Activated CD8-positive, alpha-beta T cell treated with anti-CD3 and anti-CD28 coated beads for 36 hours (primary cell): ENCODE measurements at regions of chr15 and their contacts with region 1.

Region 1: GRCh38 chr15:91706322-91707032 is 147.0 kb upstream of the SLCO3A1 start:
- DNase-seq: peak; percentile 92
- ATAC-seq: peak; percentile 99
- H3K4me3 Mint-ChIP-seq: no peak overlapping the region
- H3K27ac Mint-ChIP-seq: peak overlapping the region; percentile 69
- H3K4me1 Mint-ChIP-seq: peaks cover 15% of the 10 kb centered on the region
- H3K27me3 Mint-ChIP-seq: peaks cover 5% of the 10 kb centered on the region
- CTCF ChIP-seq: peak; percentile 85

Region 2: GRCh38 chr15:91445758-91446157 is 260.7 kb before region 1 on chr15:
- CTCF ChIA-PET with region 1: no interaction called
- POLR2A ChIA-PET with region 1: no interaction called
- intact Hi-C with region 1: no loop called
- DNase-seq: no peak
- ATAC-seq: no peak
- H3K4me3 Mint-ChIP-seq: no peak overlapping the region
- H3K27ac Mint-ChIP-seq: no peak overlapping the region
- H3K4me1 Mint-ChIP-seq: no peaks in the 10 kb centered on the region
- H3K27me3 Mint-ChIP-seq: no peaks in the 10 kb centered on the region
- CTCF ChIP-seq: no peak

Region 3: DNA sequence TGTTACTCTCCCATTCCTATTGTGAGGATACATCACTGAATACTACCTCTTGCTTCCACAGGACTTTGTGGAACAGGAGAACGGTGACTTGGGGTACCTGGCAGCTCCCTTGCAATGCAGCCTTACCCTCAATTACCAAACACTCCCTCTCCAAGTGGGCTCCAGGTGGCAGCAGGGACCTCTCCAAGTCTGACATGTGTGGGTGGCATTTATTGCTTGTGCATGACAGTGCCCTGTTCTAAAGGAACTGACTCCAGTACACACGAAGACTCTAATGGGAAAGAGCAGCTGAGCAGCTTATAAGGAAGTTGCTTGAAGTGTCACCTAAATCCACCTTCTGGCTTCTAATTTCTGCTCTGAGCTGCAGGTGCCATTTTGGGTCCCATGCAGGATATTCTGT is 27.0 kb before region 1 on chr15:
- CTCF ChIA-PET with region 1: interaction called, 13 read pairs
- POLR2A ChIA-PET with region 1: no interaction called
- intact Hi-C with region 1: no loop called
- DNase-seq: peak; percentile 17
- ATAC-seq: no peak
- H3K4me3 Mint-ChIP-seq: no peak overlapping the region
- H3K27ac Mint-ChIP-seq: no peak overlapping the region
- H3K4me1 Mint-ChIP-seq: no peaks in the 10 kb centered on the region
- H3K27me3 Mint-ChIP-seq: peaks cover 12% of the 10 kb centered on the region
- CTCF ChIP-seq: no peak

Region 4: DNA sequence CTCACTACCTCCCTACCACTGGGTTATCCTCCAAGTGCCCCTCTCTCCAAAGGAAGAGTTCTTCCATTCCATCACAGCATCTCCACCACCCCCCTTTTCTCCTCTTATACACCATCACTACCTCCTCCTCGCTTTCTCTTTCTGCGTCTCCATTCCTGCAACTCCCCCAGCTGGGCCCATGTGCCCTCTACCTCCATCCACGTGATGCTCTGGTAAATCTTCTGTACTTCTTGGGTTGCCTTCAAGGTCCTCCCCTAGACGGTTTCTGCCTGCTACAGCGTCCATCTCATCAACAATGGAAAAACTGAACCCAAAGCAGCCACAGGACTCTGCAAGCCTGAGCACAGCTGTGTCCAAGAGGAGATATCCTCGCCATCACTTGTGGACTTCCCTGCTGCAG is 17.5 kb after region 1 on chr15:
- CTCF ChIA-PET with region 1: interaction called, 29 read pairs
- POLR2A ChIA-PET with region 1: no interaction called
- intact Hi-C with region 1: no loop called
- DNase-seq: no peak
- ATAC-seq: no peak
- H3K4me3 Mint-ChIP-seq: no peak overlapping the region
- H3K27ac Mint-ChIP-seq: no peak overlapping the region
- H3K4me1 Mint-ChIP-seq: no peaks in the 10 kb centered on the region
- H3K27me3 Mint-ChIP-seq: no peaks in the 10 kb centered on the region
- CTCF ChIP-seq: no peak

Region 5: GRCh38 chr15:91942676-91943576 is 236.4 kb after region 1 on chr15:
- CTCF ChIA-PET with region 1: interaction called, 13 read pairs
- POLR2A ChIA-PET with region 1: no interaction called
- intact Hi-C with region 1: no loop called
- DNase-seq: peak; percentile 46
- ATAC-seq: peak; percentile 77
- H3K4me3 Mint-ChIP-seq: no peak overlapping the region
- H3K27ac Mint-ChIP-seq: peak overlapping the region; percentile 27
- H3K4me1 Mint-ChIP-seq: peaks cover 23% of the 10 kb centered on the region
- H3K27me3 Mint-ChIP-seq: peaks cover 2% of the 10 kb centered on the region
- CTCF ChIP-seq: no peak